Activated CD4-positive, alpha-beta T cell treated with anti-CD3 and anti-CD28 coated beads, Interleukin-2, amount 10 ng/mL, durations not matched to agents 24 days and 14 days (primary cell): ENCODE measurements at regions of chr5 and their contacts with region 1.

Region 1: GRCh38 chr5:1792842-1793266 is 6.8 kb downstream of the MRPL36 start:
- DNase-seq: peak; percentile 94
- H3K4me3 Mint-ChIP-seq: peak overlapping the region; percentile 86
- H3K27ac Mint-ChIP-seq: peak overlapping the region; percentile 97
- H3K4me1 Mint-ChIP-seq: peaks cover 74% of the 10 kb centered on the region
- H3K27me3 Mint-ChIP-seq: no peaks in the 10 kb centered on the region

Region 2: DNA sequence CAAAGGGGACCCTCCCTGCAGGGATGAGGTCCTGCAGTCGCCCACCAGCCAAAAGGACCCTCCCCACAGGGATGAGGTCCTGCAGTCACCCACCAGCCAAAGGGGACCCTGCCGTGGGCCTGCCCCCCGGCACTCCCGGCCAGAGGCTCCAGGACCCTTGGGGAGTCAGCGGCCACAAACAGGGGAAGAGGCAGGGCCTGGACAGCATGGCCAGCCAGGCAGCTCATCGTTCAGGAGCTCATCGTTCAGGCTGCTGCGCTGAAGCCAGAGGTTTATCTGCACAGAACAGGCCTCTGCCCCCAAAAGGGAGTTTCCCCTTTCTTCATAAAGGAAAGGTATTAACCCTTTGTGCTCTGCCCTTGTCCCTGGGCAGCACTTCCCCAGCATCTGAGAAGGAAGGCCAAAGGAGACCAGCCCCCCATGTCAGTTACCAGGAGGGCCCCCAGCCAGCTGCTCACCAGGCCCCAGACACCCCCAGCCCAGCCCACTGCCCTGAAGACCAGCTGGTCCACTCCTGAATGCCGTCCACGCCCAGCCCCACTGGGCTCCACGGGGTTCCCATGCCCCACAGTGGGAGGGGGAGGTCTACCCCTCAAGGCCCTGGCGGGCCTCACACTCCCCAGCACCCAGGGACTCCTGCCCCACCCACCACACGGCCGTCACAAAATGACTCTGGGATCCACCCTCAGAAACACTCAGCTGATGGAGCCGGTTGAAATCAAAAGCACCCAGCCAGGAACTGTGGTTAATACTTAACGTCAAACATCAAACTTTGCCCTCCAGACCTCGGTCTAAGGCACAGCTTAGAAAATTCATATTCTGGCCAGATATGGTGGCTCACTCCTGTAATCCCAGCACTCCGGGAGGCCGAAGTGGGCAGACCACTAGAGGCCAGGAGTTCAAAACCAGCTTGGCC is 687.2 kb before region 1 on chr5:
- intact Hi-C with region 1: loop called (anchors 5 kb)
- DNase-seq: peak; percentile 94
- H3K4me3 Mint-ChIP-seq: peak overlapping the region; percentile 82
- H3K27ac Mint-ChIP-seq: peak overlapping the region; percentile 83
- H3K4me1 Mint-ChIP-seq: peaks cover 62% of the 10 kb centered on the region
- H3K27me3 Mint-ChIP-seq: no peaks in the 10 kb centered on the region

Region 3: DNA sequence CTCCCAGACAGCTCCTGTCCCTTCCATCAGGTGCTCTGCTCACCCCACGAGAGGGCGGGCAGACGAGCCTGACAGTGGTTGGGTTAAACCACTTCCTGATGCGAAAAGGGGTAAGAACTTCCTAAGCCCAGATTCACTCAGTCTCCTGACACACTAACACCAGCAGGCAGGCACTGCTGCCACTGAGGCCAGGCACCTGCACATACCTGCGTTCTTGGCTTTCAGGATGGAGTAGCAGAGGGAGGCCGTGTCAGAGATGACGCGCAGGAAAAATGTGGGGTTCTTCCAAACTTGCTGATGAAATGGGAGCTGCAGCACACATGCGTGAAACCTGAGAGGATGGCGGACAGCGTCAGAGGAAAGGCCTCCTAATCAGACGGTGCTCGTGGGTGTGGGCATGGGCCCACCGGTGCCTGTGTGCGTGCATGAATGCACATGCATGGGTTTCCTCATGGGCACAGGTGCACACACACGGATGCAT is 537.7 kb before region 1 on chr5:
- intact Hi-C with region 1: no loop called
- DNase-seq: peak; percentile 86
- H3K4me3 Mint-ChIP-seq: peak overlapping the region; percentile 58
- H3K27ac Mint-ChIP-seq: peak overlapping the region; percentile 3
- H3K4me1 Mint-ChIP-seq: peaks cover 16% of the 10 kb centered on the region
- H3K27me3 Mint-ChIP-seq: no peaks in the 10 kb centered on the region

Region 4: DNA sequence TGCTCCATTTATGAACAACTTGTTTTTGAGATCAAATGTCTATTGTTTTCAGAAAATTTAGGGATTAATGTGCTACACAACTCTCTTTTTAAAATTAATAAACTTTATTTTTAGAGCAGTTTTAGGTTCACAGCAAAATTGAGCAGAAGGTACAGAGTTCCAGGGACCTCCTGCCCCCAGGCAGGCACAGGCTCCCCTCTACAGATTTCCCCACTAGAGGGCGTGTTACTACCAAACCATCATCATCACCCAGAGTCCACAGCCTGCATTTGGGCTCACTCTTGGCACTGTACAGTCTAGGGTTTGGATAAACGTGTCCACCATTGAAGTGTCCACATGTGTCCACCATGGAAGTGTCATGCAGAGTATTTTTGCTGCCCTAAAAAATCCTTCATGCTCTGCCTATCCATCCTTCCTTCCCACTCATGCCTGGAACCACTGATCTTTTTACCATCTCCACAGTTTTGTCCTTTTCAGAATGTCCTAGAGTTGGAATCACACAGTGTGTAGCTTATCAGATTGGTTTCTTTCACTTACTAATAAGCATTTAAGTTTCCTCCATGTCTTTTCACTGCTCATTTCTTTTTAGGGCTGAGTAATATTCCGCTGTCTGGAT is 55.0 kb before region 1 on chr5:
- intact Hi-C with region 1: loop called (anchors 5 kb)
- DNase-seq: peak; percentile 85
- H3K4me3 Mint-ChIP-seq: no peak overlapping the region
- H3K27ac Mint-ChIP-seq: no peak overlapping the region
- H3K4me1 Mint-ChIP-seq: no peaks in the 10 kb centered on the region
- H3K27me3 Mint-ChIP-seq: peaks cover 27% of the 10 kb centered on the region